ENCODE measurements at regions of chr11 and their contacts with region 1.

Region 1: DNA sequence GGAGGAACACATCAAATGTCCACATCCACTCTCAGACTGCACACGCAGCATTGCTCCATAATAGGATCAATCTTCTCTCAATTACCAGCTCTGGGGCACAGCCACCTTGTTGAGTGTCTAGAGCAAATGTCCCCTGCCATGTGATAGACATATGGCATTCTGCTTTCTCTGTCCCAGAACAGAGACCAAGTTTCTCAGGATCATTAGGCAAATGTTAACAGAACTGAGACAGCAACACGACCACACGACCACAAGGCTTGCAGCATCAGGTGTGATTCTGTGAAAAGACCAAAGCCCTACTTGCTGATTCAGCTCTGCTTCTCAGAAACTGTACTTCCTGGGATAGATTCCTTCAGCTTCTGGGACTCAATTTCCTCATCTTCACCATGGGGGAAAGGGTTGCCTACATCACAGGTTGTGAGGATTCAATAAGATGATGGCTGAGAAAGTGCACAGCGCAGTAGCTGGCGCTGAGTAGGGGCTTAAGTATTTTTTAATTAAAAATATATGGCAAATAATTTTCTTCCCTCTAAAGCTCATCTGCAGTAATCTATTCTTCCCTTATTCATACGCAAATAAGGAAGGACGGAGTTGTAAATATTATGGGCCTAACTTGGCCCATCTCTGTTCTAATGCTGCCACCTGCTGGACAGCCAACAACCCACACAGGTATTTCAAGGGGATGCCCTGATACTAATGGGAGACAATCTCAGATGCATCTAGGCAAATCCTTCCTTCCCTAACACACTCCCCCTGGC is 54.3 kb upstream of the USP47 start:
- DNase-seq: peak; percentile 45
- CTCF ChIP-seq: peak; percentile 84

Region 2: GRCh38 chr11:10933455-10934292 is 853.8 kb before region 1 on chr11:
- in situ Hi-C with region 1: loop called (anchors 25 kb)
- DNase-seq: peak; percentile 79
- CTCF ChIP-seq: peak; percentile 90

Region 3: GRCh38 chr11:11028017-11028692 is 759.3 kb before region 1 on chr11:
- in situ Hi-C with region 1: loop called (anchors 10 kb)
- DNase-seq: peak; percentile 54
- CTCF ChIP-seq: peak; percentile 88

Region 4: DNA sequence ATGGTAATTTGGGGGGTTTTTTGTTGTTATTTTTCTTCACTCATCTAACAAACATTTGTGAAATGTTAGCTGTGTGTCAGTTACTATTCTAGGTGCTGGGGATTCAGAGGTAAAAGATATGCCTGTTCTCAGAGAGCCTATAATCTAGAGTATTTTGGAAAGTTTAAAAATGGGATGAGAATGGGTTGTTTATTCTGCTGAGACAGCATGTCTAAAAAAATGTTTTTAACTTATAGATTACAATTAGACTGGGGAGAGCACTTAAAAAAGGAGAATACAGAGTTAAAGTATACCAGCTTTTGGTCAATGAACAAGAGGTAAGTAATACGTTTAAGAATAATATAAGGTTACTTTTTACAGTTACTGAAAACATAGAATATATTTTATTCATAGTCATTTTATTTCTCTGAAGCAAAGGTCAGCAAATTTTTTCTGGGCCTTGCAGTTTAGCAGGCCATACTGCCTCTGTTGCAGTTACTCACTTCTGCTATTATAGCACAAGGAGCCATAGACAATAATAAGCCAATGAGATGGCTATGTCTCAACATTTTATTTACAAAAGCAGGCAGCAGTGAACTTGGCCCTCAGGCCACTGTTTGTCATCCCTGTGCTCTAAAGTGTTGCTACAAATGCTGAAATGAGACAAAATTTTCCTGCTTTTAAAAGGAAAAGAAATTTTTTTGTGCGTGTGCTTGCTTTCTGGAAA is 160.9 kb after region 1 on chr11:
- in situ Hi-C with region 1: no loop called
- DNase-seq: no peak
- CTCF ChIP-seq: no peak